Activated CD8-positive, alpha-beta T cell treated with anti-CD3 and anti-CD28 coated beads for 36 hours (primary cell): ENCODE measurements at regions of chr1 and their contacts with region 1.

Region 1: GRCh38 chr1:235253219-235253962 is 74.6 kb downstream of the ARID4B start:
- DNase-seq: peak; percentile 74
- ATAC-seq: peak; percentile 96
- H3K4me3 Mint-ChIP-seq: no peak overlapping the region
- H3K27ac Mint-ChIP-seq: no peak overlapping the region
- H3K4me1 Mint-ChIP-seq: peaks cover 32% of the 10 kb centered on the region
- H3K27me3 Mint-ChIP-seq: no peaks in the 10 kb centered on the region
- CTCF ChIP-seq: peak; percentile 96

Region 2: GRCh38 chr1:234862944-234863515 is 390.4 kb before region 1 on chr1:
- CTCF ChIA-PET with region 1: no interaction called
- POLR2A ChIA-PET with region 1: no interaction called
- intact Hi-C with region 1: no loop called
- DNase-seq: no peak
- ATAC-seq: no peak
- H3K4me3 Mint-ChIP-seq: no peak overlapping the region
- H3K27ac Mint-ChIP-seq: no peak overlapping the region
- H3K4me1 Mint-ChIP-seq: peaks cover 19% of the 10 kb centered on the region
- H3K27me3 Mint-ChIP-seq: no peaks in the 10 kb centered on the region
- CTCF ChIP-seq: no peak

Region 3: GRCh38 chr1:235239851-235240250 is 13.5 kb before region 1 on chr1:
- CTCF ChIA-PET with region 1: interaction called, 19 read pairs
- POLR2A ChIA-PET with region 1: interaction called, 3 read pairs
- intact Hi-C with region 1: no loop called
- DNase-seq: no peak
- ATAC-seq: no peak
- H3K4me3 Mint-ChIP-seq: no peak overlapping the region
- H3K27ac Mint-ChIP-seq: no peak overlapping the region
- H3K4me1 Mint-ChIP-seq: peaks cover 24% of the 10 kb centered on the region
- H3K27me3 Mint-ChIP-seq: no peaks in the 10 kb centered on the region
- CTCF ChIP-seq: no peak